Activated CD8-positive, alpha-beta memory T cell treated with anti-CD3 and anti-CD28 coated beads, Interleukin-2, amount 10 ng/mL, durations not matched to agents 7 days and 5 days (primary cell): ENCODE measurements at regions of chr5 and their contacts with region 1.

Region 1: GRCh38 chr5:39948867-39949468 is 524.2 kb upstream of the DAB2 start:
- DNase-seq: peak; percentile 69
- ATAC-seq: peak; percentile 89
- H3K4me3 Mint-ChIP-seq: no peak overlapping the region
- H3K27ac Mint-ChIP-seq: peak overlapping the region; percentile 5
- H3K4me1 Mint-ChIP-seq: peaks cover 2% of the 10 kb centered on the region
- H3K27me3 Mint-ChIP-seq: no peaks in the 10 kb centered on the region

Region 2: GRCh38 chr5:40687321-40687720 is 738.4 kb after region 1 on chr5:
- CTCF ChIA-PET with region 1: interaction called, 10 read pairs
- DNase-seq: no peak
- ATAC-seq: no peak
- H3K4me3 Mint-ChIP-seq: peak overlapping the region; percentile 86
- H3K27ac Mint-ChIP-seq: peak overlapping the region; percentile 86
- H3K4me1 Mint-ChIP-seq: peaks cover 74% of the 10 kb centered on the region
- H3K27me3 Mint-ChIP-seq: no peaks in the 10 kb centered on the region

Region 3: GRCh38 chr5:40736103-40736875 is 787.3 kb after region 1 on chr5:
- CTCF ChIA-PET with region 1: interaction called, 12 read pairs
- DNase-seq: no peak
- ATAC-seq: peak; percentile 75
- H3K4me3 Mint-ChIP-seq: no peak overlapping the region
- H3K27ac Mint-ChIP-seq: no peak overlapping the region
- H3K4me1 Mint-ChIP-seq: peaks cover 27% of the 10 kb centered on the region
- H3K27me3 Mint-ChIP-seq: no peaks in the 10 kb centered on the region